Endothelial cell of umbilical vein (primary cell): ENCODE measurements at regions of chr2 and their contacts with region 1.

Region 1: GRCh38 chr2:95345566-95346230 is 48.6 kb downstream of the KCNIP3 start:
- DNase-seq: peak; percentile 66
- H3K4me3 ChIP-seq: peak overlapping the region; percentile 16 to 77 (median 32)
- H3K27ac ChIP-seq: no peak overlapping the region
- H3K4me1 ChIP-seq: peaks cover 7% of the 10 kb centered on the region
- H3K27me3 ChIP-seq: peaks cover 9 to 19% of the 10 kb centered on the region in 2 experiments
- CTCF ChIP-seq: peak; percentile 97 to 98
- POLR2A ChIP-seq: no peak

Region 2: DNA sequence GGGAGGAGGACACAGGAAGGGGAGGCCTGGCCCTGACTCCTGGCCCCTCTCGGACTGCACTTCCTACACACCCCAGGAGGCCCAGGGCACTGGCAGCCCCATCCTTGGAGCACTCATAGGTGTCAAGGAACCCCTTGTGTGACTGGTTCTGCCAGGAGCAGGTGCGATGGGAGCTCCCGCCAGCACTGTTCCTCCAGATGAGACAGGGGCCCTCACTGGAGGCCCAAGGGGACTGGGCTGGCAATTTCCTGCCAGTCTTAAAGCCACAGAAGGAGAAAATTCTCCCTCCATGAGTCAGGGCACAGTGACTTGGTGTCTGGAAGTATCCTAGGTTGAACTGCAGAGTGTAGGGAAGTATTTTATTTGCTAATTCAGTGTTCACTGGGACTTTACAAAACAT is 363.0 kb before region 1 on chr2:
- CTCF ChIA-PET with region 1: no interaction called
- POLR2A ChIA-PET with region 1: no interaction called
- dilution Hi-C with region 1: no loop called
- intact Hi-C with region 1: no loop called
- DNase-seq: no peak
- H3K4me3 ChIP-seq: no peak overlapping the region
- H3K27ac ChIP-seq: no peak overlapping the region
- H3K4me1 ChIP-seq: no peaks in the 10 kb centered on the region
- H3K27me3 ChIP-seq: no peaks in the 10 kb centered on the region
- CTCF ChIP-seq: no peak
- POLR2A ChIP-seq: no peak

Region 3: DNA sequence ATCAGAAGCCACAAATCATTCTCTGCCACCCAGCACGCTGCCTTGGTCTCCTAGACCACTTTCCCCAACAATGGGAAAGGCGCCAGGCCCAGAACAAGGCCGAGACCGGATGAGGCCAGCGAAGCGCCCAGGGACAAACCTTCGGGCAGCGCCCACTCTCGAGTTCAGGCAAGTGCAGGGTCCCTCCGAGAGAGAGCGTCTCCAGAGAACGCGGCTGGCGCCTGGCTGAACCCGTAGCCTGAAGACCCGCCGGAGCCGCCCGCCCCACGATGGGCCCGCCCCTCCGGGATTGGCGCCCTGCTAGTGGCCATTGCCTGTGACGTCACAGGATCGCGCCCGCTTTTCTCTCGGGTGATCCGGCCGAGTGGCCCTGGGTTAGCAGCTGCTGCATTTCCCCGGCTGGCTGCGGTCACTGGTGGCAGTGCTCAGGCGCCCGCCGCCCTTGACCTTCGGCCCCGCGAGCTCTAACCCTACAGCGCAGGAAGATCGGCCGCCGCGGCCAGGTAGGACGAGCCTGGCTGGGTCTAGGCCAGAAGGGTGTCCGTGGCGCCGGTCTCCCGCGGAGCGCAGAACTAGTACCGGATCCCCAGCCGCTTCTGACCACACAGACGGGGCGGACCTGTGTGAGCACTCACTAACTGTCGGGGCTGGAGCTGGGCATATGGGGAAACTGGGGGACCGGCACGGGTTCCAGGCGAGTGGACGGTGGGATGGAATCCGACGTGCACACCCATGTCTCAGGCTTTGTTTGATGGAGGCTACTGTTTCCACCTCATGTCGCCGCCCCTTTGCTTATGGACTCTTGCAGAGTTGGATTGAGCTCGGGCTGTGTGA is 56.9 kb after region 1 on chr2 and contains the start of gene FAHD2A:
- CTCF ChIA-PET with region 1: interaction called, 12 read pairs
- POLR2A ChIA-PET with region 1: no interaction called
- dilution Hi-C with region 1: no loop called
- intact Hi-C with region 1: loop called (anchors 1 kb)
- DNase-seq: peak; percentile 88
- H3K4me3 ChIP-seq: peak within 1 kb of the TSS; percentile 60 to 95 (median 73)
- H3K27ac ChIP-seq: peak within 1 kb of the TSS; percentile 85
- H3K4me1 ChIP-seq: peaks cover 13% of the 10 kb centered on the region
- H3K27me3 ChIP-seq: no peaks in the 10 kb centered on the region
- CTCF ChIP-seq: no peak
- POLR2A ChIP-seq: peak; percentile 85
- total RNA-seq, gene FAHD2A: 27.5 and 33.1 TPM in 2 replicates

Region 4: GRCh38 chr2:95574506-95574905 is 228.8 kb after region 1 on chr2:
- CTCF ChIA-PET with region 1: no interaction called
- POLR2A ChIA-PET with region 1: no interaction called
- dilution Hi-C with region 1: no loop called
- intact Hi-C with region 1: no loop called
- DNase-seq: no peak
- H3K4me3 ChIP-seq: no peak overlapping the region
- H3K27ac ChIP-seq: no peak overlapping the region
- H3K4me1 ChIP-seq: no peaks in the 10 kb centered on the region
- H3K27me3 ChIP-seq: peaks cover 5 to 12% of the 10 kb centered on the region in 2 experiments
- CTCF ChIP-seq: no peak
- POLR2A ChIP-seq: no peak